ENCODE measurements at regions of chr6 and their contacts with region 1.

Region 1: GRCh38 chr6:36177166-36177565 is 19.4 kb upstream of the BRPF3 start:
- DNase-seq: peak; percentile 12
- H3K4me3 ChIP-seq: no peak overlapping the region
- H3K27ac ChIP-seq: no peak overlapping the region
- H3K4me1 ChIP-seq: no peaks in the 10 kb centered on the region
- H3K27me3 ChIP-seq: no peaks in the 10 kb centered on the region
- CTCF ChIP-seq: no peak

Region 2: GRCh38 chr6:36099872-36100483 is 77.2 kb before region 1 on chr6:
- CTCF ChIA-PET with region 1: no interaction called
- dilution Hi-C with region 1: loop called (anchors 5 kb)
- in situ Hi-C with region 1: no loop called
- intact Hi-C with region 1: no loop called
- DNase-seq: no peak
- H3K4me3 ChIP-seq: no peak overlapping the region
- H3K27ac ChIP-seq: no peak overlapping the region
- H3K4me1 ChIP-seq: no peaks in the 10 kb centered on the region
- H3K27me3 ChIP-seq: no peaks in the 10 kb centered on the region
- CTCF ChIP-seq: no peak

Region 3: DNA sequence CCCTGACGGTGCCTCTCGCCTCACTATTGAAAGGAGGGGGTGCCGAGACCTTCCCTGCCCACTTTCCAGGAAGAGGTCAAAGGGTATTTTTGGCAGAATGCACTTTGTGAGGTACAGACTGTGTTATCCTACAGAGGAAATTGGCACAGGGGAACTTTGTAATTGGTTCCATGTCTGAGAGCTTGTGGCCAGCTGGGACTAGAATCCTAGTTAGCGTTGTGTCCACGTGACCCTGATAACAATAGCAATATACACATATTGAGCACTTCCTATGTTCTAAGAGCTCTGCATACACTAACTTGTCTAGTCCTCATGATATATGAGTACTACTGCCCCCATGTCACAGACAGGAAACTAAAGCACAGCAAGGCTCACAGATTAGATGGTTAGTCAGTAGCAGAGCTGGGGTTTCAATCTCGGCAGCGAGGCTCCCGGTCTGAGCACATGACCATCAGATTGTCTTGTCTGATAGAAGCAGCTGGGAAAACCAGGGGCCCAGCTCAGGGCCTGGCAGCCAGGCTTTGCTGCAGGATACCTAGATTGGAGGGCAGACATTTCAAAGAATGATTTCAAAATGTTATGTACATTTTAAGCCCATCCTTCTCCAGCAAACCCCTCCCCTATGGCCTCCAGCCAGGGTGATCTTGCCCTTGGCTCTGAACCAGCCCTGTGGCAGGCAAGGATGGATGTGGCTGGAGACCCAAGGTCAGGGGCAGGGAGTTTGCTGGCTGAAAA is 45.5 kb before region 1 on chr6:
- CTCF ChIA-PET with region 1: no interaction called
- dilution Hi-C with region 1: no loop called
- in situ Hi-C with region 1: no loop called
- intact Hi-C with region 1: loop called (anchors 5 kb)
- DNase-seq: no peak
- H3K4me3 ChIP-seq: no peak overlapping the region
- H3K27ac ChIP-seq: no peak overlapping the region
- H3K4me1 ChIP-seq: peaks cover 23% of the 10 kb centered on the region
- H3K27me3 ChIP-seq: no peaks in the 10 kb centered on the region
- CTCF ChIP-seq: no peak

Region 4: DNA sequence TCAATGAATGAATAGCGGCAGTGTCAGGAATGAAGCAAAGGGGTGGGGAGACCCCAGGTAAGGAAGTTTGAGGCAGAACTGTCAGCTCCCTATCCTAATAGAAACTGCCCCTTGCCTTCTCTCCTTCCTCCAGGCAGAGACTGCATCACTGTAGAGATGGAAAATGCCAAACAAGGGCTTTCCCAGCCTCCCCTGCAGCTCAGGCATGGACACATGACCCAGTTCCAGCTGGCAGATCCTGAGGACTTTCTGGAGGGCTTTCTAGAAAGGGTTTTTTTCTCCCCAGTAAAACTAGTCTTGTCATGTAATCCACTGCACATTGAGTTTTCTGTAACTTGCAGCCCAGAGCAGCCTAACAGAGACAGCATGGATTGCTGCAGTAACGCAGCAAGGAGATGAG is 74.8 kb after region 1 on chr6:
- CTCF ChIA-PET with region 1: no interaction called
- dilution Hi-C with region 1: loop called (anchors 5 kb)
- in situ Hi-C with region 1: no loop called
- intact Hi-C with region 1: no loop called
- DNase-seq: no peak
- H3K4me3 ChIP-seq: no peak overlapping the region
- H3K27ac ChIP-seq: no peak overlapping the region
- H3K4me1 ChIP-seq: peaks cover 15% of the 10 kb centered on the region
- H3K27me3 ChIP-seq: no peaks in the 10 kb centered on the region
- CTCF ChIP-seq: no peak

Region 5: GRCh38 chr6:36280467-36280866 is 103.3 kb after region 1 on chr6:
- CTCF ChIA-PET with region 1: no interaction called
- dilution Hi-C with region 1: no loop called
- in situ Hi-C with region 1: no loop called
- intact Hi-C with region 1: no loop called
- DNase-seq: no peak
- H3K4me3 ChIP-seq: no peak overlapping the region
- H3K27ac ChIP-seq: no peak overlapping the region
- H3K4me1 ChIP-seq: peaks cover 3% of the 10 kb centered on the region
- H3K27me3 ChIP-seq: peaks cover 4% of the 10 kb centered on the region
- CTCF ChIP-seq: no peak

Region 6: DNA sequence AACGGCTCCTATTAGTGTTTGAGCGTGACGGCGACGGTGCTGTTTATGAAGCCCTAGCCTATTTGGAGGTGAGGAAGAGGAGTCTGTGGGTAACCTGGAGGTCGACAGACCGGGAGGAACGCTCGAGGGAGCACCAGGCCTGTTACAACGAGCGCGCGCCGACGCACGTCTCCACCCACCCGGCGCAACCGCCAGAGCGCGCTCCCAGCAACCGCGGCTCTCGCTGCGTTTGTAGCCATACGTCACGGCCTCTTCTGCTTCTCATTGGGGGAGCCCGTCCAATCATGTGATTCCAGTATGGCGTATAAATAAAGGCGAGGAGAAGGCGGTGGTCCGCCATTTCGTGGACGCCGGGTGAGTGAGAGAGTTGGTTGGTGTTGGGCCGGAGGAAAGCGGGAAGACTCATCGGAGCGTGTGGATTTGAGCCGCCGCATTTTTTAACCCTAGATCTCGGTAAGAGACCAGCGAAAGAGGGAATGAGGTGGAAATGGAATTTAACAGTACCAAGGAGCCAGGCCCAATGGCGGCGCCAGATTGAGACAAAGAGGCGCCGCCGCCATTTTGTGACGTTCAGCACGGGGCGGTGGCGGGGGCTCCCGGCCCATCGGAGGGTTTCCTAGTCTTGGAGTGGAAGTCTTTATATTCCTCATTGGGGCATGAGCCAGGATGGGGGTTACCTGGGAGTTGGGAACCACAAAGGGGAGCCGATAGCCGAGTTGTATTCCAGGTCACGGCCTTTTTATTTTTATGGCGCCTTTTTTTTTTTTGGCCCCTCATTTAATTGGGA is 417.1 kb after region 1 on chr6 and contains the start of gene SRSF3:
- CTCF ChIA-PET with region 1: no interaction called
- dilution Hi-C with region 1: no loop called
- in situ Hi-C with region 1: no loop called
- intact Hi-C with region 1: no loop called
- DNase-seq: peak; percentile 97
- H3K4me3 ChIP-seq: peak within 1 kb of the TSS; percentile 68 to 99 (median 92)
- H3K27ac ChIP-seq: peak within 1 kb of the TSS; percentile 97
- H3K4me1 ChIP-seq: peaks cover 35% of the 10 kb centered on the region
- H3K27me3 ChIP-seq: no peaks in the 10 kb centered on the region
- CTCF ChIP-seq: peak in 1 of 2 donors; percentile 57
- total RNA-seq, gene SRSF3: 167 to 323 TPM